Motor neuron (in vitro differentiated cells): ENCODE measurements at regions of chr12 and their contacts with region 1.

Region 1: GRCh38 chr12:14845350-14845750 is 2.0 kb upstream of the ART4 start:
- ATAC-seq: peak; percentile 23 to 67 (median 47)
- H3K4me3 ChIP-seq: no peak overlapping the region
- H3K27ac ChIP-seq: no peak overlapping the region
- H3K4me1 ChIP-seq: peaks cover 4% of the 10 kb centered on the region in 2 donors

Region 2: GRCh38 chr12:14995583-14996425 is 150.5 kb after region 1 on chr12:
- in situ Hi-C with region 1: loop called in 4 of 9 experiments (anchors 10 to 25 kb)
- ATAC-seq: peak in 1 of 8 experiments; percentile 34
- H3K4me3 ChIP-seq: no peak overlapping the region
- H3K27ac ChIP-seq: no peak overlapping the region
- H3K4me1 ChIP-seq: no peaks in the 10 kb centered on the region

Region 3: DNA sequence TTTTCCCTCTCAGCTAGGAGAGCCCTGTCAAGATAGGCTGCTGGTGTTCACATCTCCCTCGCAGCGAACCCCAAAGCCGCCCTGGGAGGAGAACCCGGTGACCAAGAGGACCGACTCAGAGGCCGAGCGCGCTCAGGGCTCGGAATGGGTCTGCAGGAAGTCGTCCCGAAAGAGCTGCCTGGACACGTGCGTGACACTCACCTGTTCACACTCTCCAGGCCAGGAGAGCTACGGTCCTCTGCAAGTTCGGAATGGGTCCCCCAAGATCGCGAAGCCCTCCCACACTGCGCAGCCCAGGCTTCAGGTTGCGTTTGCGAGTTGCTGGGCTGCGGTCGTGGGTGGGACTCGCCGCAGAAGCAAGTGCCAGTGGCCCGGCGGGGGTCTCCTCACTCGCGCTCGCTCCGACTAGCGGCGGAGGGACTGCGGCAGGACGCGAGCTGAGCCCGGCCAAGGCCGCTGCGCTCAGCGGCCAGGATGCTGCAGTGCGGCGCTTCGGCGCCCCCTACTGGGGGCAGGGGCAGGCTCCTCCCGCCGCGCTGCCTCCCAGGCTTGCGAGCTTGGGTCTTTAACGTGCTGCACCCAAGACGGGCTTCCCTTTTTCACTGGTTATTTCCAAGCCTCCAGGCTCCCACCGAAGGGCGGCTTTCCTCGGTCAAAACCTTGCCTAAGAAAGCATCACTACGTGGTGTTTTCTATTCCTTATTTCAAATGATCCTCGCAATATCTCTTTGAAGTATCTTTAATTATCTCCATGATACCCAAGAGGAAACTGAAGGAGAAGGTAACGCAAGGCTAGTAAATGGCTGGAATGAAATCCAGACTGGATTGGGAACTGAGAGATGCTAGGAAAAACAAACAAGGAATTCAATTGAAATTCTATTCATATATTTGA is 375.9 kb after region 1 on chr12 and contains the start of gene RERG:
- in situ Hi-C with region 1: loop called in 5 of 9 experiments (anchors 25 kb)
- ATAC-seq: peak; percentile 97 to 100 (median 99)
- H3K4me3 ChIP-seq: peak within 1 kb of the TSS; percentile 26 to 51 (median 34)
- H3K27ac ChIP-seq: no peak within 1 kb of the TSS
- H3K4me1 ChIP-seq: peaks cover 8 to 10% of the 10 kb centered on the region in 2 donors
- total RNA-seq, gene RERG: 0.18 to 23.5 (median 1.7) TPM

Region 4: DNA sequence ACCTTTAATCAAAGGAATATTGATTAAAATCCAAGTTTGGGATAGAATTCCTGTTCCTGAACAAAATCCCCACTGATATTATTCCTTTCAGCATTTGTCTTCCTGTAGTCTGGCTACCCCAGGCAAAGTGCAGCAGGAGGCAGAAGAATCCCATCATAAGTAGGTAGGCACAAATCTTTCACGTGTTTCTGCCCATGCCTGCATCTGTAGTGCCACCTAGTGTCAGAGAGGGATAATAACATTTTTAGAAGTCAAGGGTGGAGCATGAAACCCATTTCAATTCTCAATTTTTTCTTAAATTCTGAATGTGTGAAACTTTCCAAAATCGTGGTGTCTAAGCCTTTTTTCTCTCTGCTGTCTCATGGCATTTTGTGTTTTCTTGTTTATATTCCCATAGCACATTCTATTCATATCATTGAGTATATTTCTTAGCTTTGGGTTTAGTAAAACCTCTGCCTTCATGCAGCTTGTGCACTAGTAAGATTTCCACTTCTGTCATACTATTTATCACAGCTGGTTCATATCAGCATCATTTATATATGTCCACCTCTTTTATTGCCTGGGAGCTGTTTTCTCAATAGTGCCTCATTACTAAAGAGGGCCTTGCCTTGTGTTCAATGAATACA is 423.7 kb after region 1 on chr12:
- in situ Hi-C with region 1: loop called in 2 of 9 experiments (anchors 25 kb)
- ATAC-seq: peak; percentile 40 to 87 (median 64)
- H3K4me3 ChIP-seq: no peak overlapping the region
- H3K27ac ChIP-seq: no peak overlapping the region
- H3K4me1 ChIP-seq: no peaks in the 10 kb centered on the region

Region 5: GRCh38 chr12:15532364-15532977 is 687.1 kb after region 1 on chr12:
- in situ Hi-C with region 1: loop called in 1 of 9 experiments (anchors 25 kb)
- ATAC-seq: peak in 3 of 8 experiments; percentile 80 to 90 (median 84)
- H3K4me3 ChIP-seq: no peak overlapping the region
- H3K27ac ChIP-seq: no peak overlapping the region
- H3K4me1 ChIP-seq: no peaks in the 10 kb centered on the region